ENCODE measurements at regions of chr1 and their contacts with region 1.

Region 1: DNA sequence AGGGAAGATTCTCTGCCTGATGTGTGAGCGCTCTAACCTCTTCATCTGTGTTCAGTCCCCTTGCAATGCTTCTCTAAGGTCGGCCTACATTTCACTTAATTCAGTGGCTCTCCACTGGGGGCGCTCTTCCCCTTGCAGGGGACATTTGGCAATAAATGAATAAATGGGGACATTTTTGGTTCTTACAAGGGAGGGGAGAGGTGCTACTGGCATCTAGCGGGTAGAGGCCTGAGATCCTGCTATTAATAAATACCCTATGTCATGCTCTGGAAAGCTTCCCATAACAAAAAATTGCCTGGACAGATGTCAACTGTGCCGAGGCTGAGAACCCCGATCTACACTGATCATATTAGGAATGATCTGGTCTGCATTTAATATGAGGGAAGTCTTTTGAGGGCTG is 25.9 kb upstream of the DNAJC11 start:
- DNase-seq: peak; percentile 71
- ATAC-seq: peak; percentile 91
- H3K4me3 ChIP-seq: no peak overlapping the region
- H3K27ac ChIP-seq: no peak overlapping the region
- H3K4me1 ChIP-seq: peaks cover 2 to 21% of the 10 kb centered on the region in 2 experiments; a peak in 2 of 4 replicates
- H3K27me3 ChIP-seq: no peaks in the 10 kb centered on the region
- CTCF ChIP-seq: peak; percentile 90 to 97 (median 91)
- POLR2A ChIP-seq: no peak
- RAD21 ChIP-seq: peak; percentile 74

Region 2: DNA sequence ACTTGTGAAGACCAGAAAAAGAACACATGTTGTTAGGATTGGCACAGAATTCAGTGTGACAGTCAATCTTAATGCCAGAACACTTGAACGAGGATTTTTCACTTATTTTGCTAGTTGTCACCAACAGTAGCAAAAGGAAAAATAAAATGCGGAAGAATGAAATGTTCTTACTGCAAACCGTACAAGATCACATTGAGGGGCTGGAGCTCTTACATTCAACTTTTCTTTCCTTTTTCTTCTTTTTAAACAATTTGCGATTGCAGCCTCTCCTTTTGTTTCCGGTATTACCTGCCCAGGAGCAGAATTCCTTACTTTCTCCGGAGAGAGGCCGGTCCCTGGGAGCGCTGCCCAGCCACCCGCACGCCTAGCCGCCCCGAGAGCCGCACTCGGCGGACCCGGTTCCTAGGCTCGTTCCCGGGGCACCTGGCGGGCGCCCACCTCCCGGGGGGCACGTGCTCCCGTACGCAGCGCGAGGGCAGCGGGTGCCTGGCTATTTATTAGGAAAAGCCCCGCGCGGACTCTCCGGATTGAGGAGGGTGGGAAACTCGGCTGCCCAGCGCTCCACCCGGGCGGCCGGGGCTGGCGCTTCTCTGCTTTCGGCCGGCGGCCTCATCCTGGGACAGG is 56.5 kb after region 1 on chr1:
- CTCF ChIA-PET with region 1: interaction called, 3 read pairs
- POLR2A ChIA-PET with region 1: interaction called, 3 read pairs
- RAD21 ChIA-PET with region 1: interaction called in 1 of 2 experiments, 4 read pairs
- intact Hi-C with region 1: loop called (anchors 2 kb)
- DNase-seq: no peak
- ATAC-seq: no peak; the same call in 1 of the 2 replicates
- H3K4me3 ChIP-seq: peak overlapping the region; percentile 65 to 71
- H3K27ac ChIP-seq: peak overlapping the region; percentile 85
- H3K4me1 ChIP-seq: peaks cover 5 to 20% of the 10 kb centered on the region in 2 experiments; a peak in 3 of 4 replicates
- H3K27me3 ChIP-seq: no peaks in the 10 kb centered on the region
- CTCF ChIP-seq: no peak
- POLR2A ChIP-seq: no peak
- RAD21 ChIP-seq: no peak; the same call in 1 of the 2 replicates